ENCODE measurements at regions of chr4 and their contacts with region 1.

Region 1: GRCh38 chr4:51895813-51896408 is 53.0 kb downstream of the DCUN1D4 start:
- DNase-seq: peak; percentile 64
- H3K4me3 ChIP-seq: no peak overlapping the region
- H3K27ac ChIP-seq: peak overlapping the region in 1 of 2 experiments; percentile 71; a peak in 2 of 4 replicates
- H3K4me1 ChIP-seq: peaks cover 0 to 5% of the 10 kb centered on the region in 2 experiments; a peak in 2 of 4 replicates
- H3K27me3 ChIP-seq: no peaks in the 10 kb centered on the region
- CTCF ChIP-seq: peak; percentile 90
- EP300 ChIP-seq: no peak
- RAD21 ChIP-seq: peak; percentile 65

Region 2: DNA sequence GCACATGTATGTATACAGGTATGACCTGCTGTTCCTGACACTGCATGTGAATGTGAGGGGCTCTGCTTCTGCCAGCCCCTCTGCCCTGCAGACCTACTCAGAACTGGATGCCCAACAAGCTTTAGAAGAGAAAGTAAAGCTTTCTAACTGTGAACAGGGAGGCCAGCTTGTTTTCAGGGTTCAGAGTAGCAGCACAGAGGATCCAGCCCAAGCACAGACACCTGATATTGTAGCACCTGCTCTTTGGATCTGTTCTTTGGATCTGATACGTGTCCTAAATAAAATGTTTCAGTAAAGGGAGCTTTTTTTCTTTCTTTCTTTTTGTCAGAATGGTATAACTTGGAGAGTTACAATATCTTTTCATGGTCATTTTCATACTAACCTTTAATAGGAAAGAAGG is 33.7 kb before region 1 on chr4:
- CTCF ChIA-PET with region 1: interaction called, 12 read pairs
- POLR2A ChIA-PET with region 1: no interaction called
- DNase-seq: no peak
- H3K4me3 ChIP-seq: no peak overlapping the region
- H3K27ac ChIP-seq: no peak overlapping the region
- H3K4me1 ChIP-seq: no peaks in the 10 kb centered on the region; a peak in 1 of 4 replicates
- H3K27me3 ChIP-seq: no peaks in the 10 kb centered on the region
- CTCF ChIP-seq: no peak
- EP300 ChIP-seq: no peak
- RAD21 ChIP-seq: no peak

Region 3: DNA sequence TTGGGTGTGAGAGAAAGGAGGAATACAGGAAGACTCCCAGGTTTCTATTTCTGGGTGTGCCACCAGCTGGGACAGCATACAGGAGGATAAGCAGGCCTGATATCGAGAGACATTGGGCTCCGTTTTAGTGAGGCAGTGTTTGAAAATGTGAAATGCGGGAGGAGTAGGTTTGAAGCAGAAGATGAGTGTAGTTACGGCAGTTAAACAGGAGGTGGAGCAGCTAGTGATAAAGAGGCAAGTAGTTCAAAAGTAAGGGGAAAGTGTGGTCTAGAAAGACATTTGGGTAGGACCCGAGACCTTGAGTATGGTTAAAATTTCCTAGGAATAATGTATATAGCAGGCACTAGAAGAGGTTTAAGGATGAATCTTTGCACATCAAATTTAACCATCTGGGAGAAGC is 10.5 kb before region 1 on chr4:
- CTCF ChIA-PET with region 1: interaction called, 18 read pairs
- POLR2A ChIA-PET with region 1: no interaction called
- DNase-seq: peak; percentile 21
- H3K4me3 ChIP-seq: no peak overlapping the region
- H3K27ac ChIP-seq: no peak overlapping the region
- H3K4me1 ChIP-seq: no peaks in the 10 kb centered on the region
- H3K27me3 ChIP-seq: no peaks in the 10 kb centered on the region
- CTCF ChIP-seq: peak; percentile 50
- EP300 ChIP-seq: no peak
- RAD21 ChIP-seq: peak; percentile 26

Region 4: DNA sequence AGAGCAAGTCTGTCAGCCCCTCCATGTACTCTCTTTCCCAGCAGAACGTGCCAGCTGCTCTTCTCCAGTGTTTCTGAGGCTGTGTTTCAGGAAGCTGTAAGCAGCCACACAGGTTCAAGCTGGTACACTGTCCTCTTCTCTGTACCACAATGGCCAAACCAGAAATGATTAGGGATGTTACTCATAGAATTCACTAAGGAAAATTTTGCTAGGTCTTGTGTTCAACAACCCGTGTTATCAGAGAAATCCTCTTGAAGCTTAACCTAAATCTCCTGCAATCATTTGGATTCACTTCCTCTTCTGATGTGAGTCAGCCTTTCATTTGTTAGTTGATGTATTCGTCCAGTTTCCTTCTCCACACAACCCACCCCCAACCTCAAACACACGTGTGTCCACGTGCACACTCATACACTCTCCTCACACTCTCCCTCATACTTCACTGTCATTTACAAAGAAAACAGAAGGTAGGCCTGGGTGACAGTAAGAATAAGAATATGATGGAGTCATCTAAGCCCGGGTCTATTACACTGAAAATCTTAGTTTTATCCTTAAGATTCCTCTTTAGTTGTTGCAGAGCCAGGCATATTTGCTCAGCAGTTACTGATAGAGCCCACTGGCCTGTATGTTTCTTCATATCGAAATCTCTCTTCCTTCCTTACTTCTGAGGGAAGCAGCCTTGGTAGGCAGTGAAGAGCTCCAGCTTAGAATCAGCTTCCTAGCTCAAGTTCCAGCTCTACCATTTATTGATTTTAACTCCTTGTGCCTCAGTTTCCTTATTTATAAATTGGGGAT is 10.5 kb after region 1 on chr4:
- CTCF ChIA-PET with region 1: interaction called, 23 read pairs
- POLR2A ChIA-PET with region 1: no interaction called
- DNase-seq: no peak
- H3K4me3 ChIP-seq: no peak overlapping the region
- H3K27ac ChIP-seq: no peak overlapping the region; a peak in 1 of 4 replicates
- H3K4me1 ChIP-seq: no peaks in the 10 kb centered on the region
- H3K27me3 ChIP-seq: no peaks in the 10 kb centered on the region
- CTCF ChIP-seq: no peak
- EP300 ChIP-seq: no peak
- RAD21 ChIP-seq: no peak

Region 5: DNA sequence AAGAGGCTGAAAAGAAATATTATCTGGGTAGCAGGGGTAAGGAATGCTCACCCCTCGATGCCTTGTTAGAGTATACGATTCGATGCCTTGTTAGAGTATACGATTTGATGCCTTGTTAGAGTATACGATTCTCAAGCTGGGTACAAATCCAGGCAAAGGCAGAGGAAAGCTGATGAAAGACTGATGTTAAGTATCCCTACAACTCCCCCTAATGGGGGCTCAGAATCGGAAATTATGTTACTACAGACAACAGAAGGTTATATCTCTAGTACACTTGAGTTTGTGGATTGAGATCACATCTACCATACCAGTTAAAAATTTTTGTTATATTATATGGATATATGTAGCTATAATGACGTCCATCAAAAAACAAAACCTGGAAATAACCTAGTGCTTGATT is 119.5 kb after region 1 on chr4:
- CTCF ChIA-PET with region 1: no interaction called
- POLR2A ChIA-PET with region 1: no interaction called
- DNase-seq: no peak
- H3K4me3 ChIP-seq: no peak overlapping the region
- H3K27ac ChIP-seq: no peak overlapping the region
- H3K4me1 ChIP-seq: no peaks in the 10 kb centered on the region
- H3K27me3 ChIP-seq: no peaks in the 10 kb centered on the region
- CTCF ChIP-seq: peak; percentile 29; the same call in 1 of the 2 replicates
- EP300 ChIP-seq: no peak
- RAD21 ChIP-seq: peak; percentile 47

Measured in SK-N-SH (cell line).